Activated B cell treated with CpG ODN at 0.5 μM for 24 hours (primary cell): ENCODE measurements at regions of chr1 and their contacts with region 1.

Region 1: GRCh38 chr1:150925816-150926741 is at the start of gene SETDB1:
- DNase-seq: peak; percentile 79
- ATAC-seq: peak; percentile 90
- H3K4me3 Mint-ChIP-seq: peak within 1 kb of the TSS; percentile 98
- H3K27ac Mint-ChIP-seq: peak within 1 kb of the TSS; percentile 98
- H3K4me1 Mint-ChIP-seq: peaks cover 35% of the 10 kb centered on the region
- H3K27me3 Mint-ChIP-seq: no peaks in the 10 kb centered on the region
- CTCF ChIP-seq: no peak
- total RNA-seq, gene SETDB1: 101 and 105 TPM in 2 replicates

Region 2: DNA sequence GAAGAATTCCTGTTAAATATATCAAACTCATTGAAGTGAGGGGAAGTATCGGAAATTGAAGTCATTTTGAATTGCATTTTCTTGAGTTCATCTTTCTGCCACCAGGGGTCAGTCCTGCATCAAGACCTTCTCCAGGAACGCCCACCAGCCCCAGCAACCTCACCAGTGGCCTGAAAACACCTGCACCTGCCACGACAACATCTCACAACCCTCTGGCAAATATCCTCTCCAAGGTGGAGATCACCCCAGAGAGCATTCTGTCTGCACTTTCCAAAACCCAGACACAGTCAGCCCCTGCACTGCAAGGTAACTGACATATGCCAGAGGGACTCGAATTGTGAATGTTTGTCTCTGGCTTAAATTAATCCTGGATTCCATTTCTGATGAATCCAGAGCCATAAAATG is 461.7 kb before region 1 on chr1:
- CTCF ChIA-PET with region 1: interaction called, 4 read pairs
- POLR2A ChIA-PET with region 1: no interaction called
- intact Hi-C with region 1: loop called (anchors 1 kb)
- DNase-seq: peak; percentile 32
- ATAC-seq: peak; percentile 80
- H3K4me3 Mint-ChIP-seq: no peak overlapping the region
- H3K27ac Mint-ChIP-seq: no peak overlapping the region
- H3K4me1 Mint-ChIP-seq: peaks cover 4% of the 10 kb centered on the region
- H3K27me3 Mint-ChIP-seq: no peaks in the 10 kb centered on the region
- CTCF ChIP-seq: no peak

Region 3: GRCh38 chr1:150621497-150622302 is 304.4 kb before region 1 on chr1:
- CTCF ChIA-PET with region 1: no interaction called
- POLR2A ChIA-PET with region 1: no interaction called
- intact Hi-C with region 1: no loop called
- DNase-seq: no peak
- ATAC-seq: peak; percentile 82
- H3K4me3 Mint-ChIP-seq: peak overlapping the region; percentile 28
- H3K27ac Mint-ChIP-seq: peak overlapping the region; percentile 82
- H3K4me1 Mint-ChIP-seq: peaks cover 36% of the 10 kb centered on the region
- H3K27me3 Mint-ChIP-seq: no peaks in the 10 kb centered on the region
- CTCF ChIP-seq: no peak

Region 4: GRCh38 chr1:150760013-150760412 is 166.1 kb before region 1 on chr1:
- CTCF ChIA-PET with region 1: interaction called, 22 read pairs
- POLR2A ChIA-PET with region 1: interaction called, 10 read pairs
- intact Hi-C with region 1: loop called (anchors 1 kb)
- DNase-seq: no peak
- ATAC-seq: peak; percentile 56
- H3K4me3 Mint-ChIP-seq: peak overlapping the region; percentile 21
- H3K27ac Mint-ChIP-seq: peak overlapping the region; percentile 72
- H3K4me1 Mint-ChIP-seq: peaks cover 46% of the 10 kb centered on the region
- H3K27me3 Mint-ChIP-seq: no peaks in the 10 kb centered on the region
- CTCF ChIP-seq: no peak

Region 5: DNA sequence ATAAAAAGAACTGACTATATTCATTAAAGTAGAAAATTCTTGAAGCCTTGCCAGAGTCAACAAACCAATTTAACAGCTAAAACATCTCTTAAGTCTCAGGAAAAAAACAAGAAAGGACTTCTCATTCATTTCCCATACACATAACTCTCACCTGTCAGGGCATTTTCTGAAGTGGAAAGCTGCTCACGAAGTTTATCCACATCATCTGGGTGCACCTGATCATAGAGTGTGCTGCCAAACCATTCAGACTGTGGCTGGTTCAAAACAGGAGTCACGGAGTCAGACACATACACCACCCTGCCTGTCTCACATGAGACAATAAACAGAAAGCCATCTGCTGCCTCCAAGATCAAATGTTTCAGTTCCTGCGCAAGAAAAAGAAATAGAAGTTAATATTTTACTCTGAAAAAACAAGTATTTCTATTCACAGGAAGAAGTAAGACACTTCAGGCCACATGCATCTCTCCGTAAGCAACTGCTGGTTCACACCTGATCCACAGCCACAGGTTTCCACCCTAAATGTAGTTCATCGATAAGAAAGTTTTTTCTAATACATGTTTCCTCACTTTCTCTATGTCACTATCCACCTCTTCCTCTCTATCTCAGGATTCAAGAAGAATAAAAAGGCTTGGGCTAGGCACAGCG is 89.8 kb before region 1 on chr1:
- CTCF ChIA-PET with region 1: interaction called, 7 read pairs
- POLR2A ChIA-PET with region 1: no interaction called
- intact Hi-C with region 1: loop called (anchors 5 kb)
- DNase-seq: no peak
- ATAC-seq: peak; percentile 34
- H3K4me3 Mint-ChIP-seq: no peak overlapping the region
- H3K27ac Mint-ChIP-seq: no peak overlapping the region
- H3K4me1 Mint-ChIP-seq: peaks cover 2% of the 10 kb centered on the region
- H3K27me3 Mint-ChIP-seq: no peaks in the 10 kb centered on the region
- CTCF ChIP-seq: no peak

Region 6: GRCh38 chr1:150890033-150890416 is 36.1 kb before region 1 on chr1:
- CTCF ChIA-PET with region 1: interaction called, 5 read pairs
- POLR2A ChIA-PET with region 1: interaction called, 4 read pairs
- intact Hi-C with region 1: loop called (anchors 1 kb)
- DNase-seq: no peak
- ATAC-seq: peak; percentile 73
- H3K4me3 Mint-ChIP-seq: peak overlapping the region; percentile 62
- H3K27ac Mint-ChIP-seq: peak overlapping the region; percentile 67
- H3K4me1 Mint-ChIP-seq: peaks cover 31% of the 10 kb centered on the region
- H3K27me3 Mint-ChIP-seq: no peaks in the 10 kb centered on the region
- CTCF ChIP-seq: no peak

Region 7: GRCh38 chr1:151008190-151008860 is 82.2 kb after region 1 on chr1 and contains the start of gene PRUNE1:
- CTCF ChIA-PET with region 1: no interaction called
- POLR2A ChIA-PET with region 1: interaction called, 3 read pairs
- intact Hi-C with region 1: loop called (anchors 1 kb)
- DNase-seq: peak; percentile 91
- ATAC-seq: peak; percentile 94
- H3K4me3 Mint-ChIP-seq: peak within 1 kb of the TSS; percentile 98
- H3K27ac Mint-ChIP-seq: peak within 1 kb of the TSS; percentile 93
- H3K4me1 Mint-ChIP-seq: peaks cover 66% of the 10 kb centered on the region
- H3K27me3 Mint-ChIP-seq: no peaks in the 10 kb centered on the region
- CTCF ChIP-seq: no peak
- total RNA-seq, gene PRUNE1: 12.9 and 14.2 TPM in 2 replicates

Region 8: GRCh38 chr1:151070474-151071276 is 144.6 kb after region 1 on chr1 and contains the start of gene GABPB2:
- CTCF ChIA-PET with region 1: no interaction called
- POLR2A ChIA-PET with region 1: no interaction called
- intact Hi-C with region 1: loop called (anchors 1 kb)
- DNase-seq: peak; percentile 89
- ATAC-seq: peak; percentile 87
- H3K4me3 Mint-ChIP-seq: peak within 1 kb of the TSS; percentile 97
- H3K27ac Mint-ChIP-seq: peak within 1 kb of the TSS; percentile 100
- H3K4me1 Mint-ChIP-seq: peaks cover 16% of the 10 kb centered on the region
- H3K27me3 Mint-ChIP-seq: no peaks in the 10 kb centered on the region
- CTCF ChIP-seq: peak; percentile 25
- total RNA-seq, gene GABPB2: 13.8 and 17.4 TPM in 2 replicates